Activated CD4-positive, alpha-beta memory T cell treated with anti-CD3 and anti-CD28 coated beads for 36 hours (primary cell): ENCODE measurements at regions of chr5 and their contacts with region 1.

Region 1: GRCh38 chr5:59799668-59800346 is 93.7 kb downstream of the PDE4D start:
- DNase-seq: no peak
- H3K4me3 Mint-ChIP-seq: no peak overlapping the region
- H3K27ac Mint-ChIP-seq: no peak overlapping the region
- H3K4me1 Mint-ChIP-seq: no peaks in the 10 kb centered on the region
- H3K27me3 Mint-ChIP-seq: peaks cover 7% of the 10 kb centered on the region

Region 2: DNA sequence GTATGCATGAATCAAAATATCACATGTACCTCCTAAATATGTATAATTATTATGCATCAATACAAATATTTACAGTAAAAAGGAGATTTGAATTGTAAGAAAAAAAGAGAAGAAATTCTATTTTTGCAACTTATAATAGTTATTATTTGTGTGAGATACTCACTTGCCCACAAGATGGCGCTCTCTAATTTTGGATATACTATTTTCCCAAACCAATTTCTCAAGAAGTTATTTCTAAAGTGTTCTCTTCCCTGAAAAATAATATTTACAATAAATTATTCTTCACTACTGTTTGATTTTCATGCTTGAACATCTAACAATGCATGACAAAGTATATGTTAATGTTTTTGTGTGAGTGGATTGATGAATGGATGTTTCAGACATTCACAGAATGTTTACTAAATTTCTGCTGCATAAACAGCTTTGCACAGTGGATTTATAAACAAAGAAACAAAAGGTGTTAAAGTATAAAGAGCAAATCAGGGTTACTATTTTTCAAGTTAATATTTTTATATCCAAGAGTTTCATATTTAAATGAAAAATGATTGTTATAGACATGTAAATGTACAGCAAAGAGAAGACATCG is 409.6 kb before region 1 on chr5:
- CTCF ChIA-PET with region 1: interaction called, 53 read pairs
- POLR2A ChIA-PET with region 1: no interaction called
- intact Hi-C with region 1: loop called (anchors 1 kb)
- DNase-seq: no peak
- H3K4me3 Mint-ChIP-seq: no peak overlapping the region
- H3K27ac Mint-ChIP-seq: no peak overlapping the region
- H3K4me1 Mint-ChIP-seq: no peaks in the 10 kb centered on the region
- H3K27me3 Mint-ChIP-seq: peaks cover 6% of the 10 kb centered on the region

Region 3: GRCh38 chr5:59506285-59506877 is 293.4 kb before region 1 on chr5:
- CTCF ChIA-PET with region 1: interaction called, 14 read pairs
- POLR2A ChIA-PET with region 1: no interaction called
- intact Hi-C with region 1: loop called (anchors 1 kb)
- DNase-seq: no peak
- H3K4me3 Mint-ChIP-seq: no peak overlapping the region
- H3K27ac Mint-ChIP-seq: no peak overlapping the region
- H3K4me1 Mint-ChIP-seq: no peaks in the 10 kb centered on the region
- H3K27me3 Mint-ChIP-seq: no peaks in the 10 kb centered on the region

Region 4: DNA sequence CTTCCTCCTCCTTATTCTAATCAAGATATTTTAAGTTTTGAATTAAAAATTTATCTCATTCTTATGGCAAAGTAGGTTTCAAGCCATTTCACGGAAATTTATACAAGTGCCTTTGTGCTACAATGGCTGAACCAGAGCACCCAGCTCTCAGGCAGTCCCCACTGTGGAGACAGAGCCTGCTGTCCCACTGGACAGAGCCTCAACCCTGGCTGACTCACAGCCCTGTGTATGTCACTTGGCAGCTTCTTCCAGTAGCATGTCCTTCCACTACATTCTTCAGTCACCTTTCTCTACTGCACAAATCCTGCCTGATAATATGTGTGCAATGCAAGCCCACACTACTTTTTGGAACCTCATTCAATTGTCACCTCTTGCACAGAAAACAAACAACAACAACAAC is 159.4 kb before region 1 on chr5:
- CTCF ChIA-PET with region 1: no interaction called
- POLR2A ChIA-PET with region 1: no interaction called
- intact Hi-C with region 1: no loop called
- DNase-seq: no peak
- H3K4me3 Mint-ChIP-seq: no peak overlapping the region
- H3K27ac Mint-ChIP-seq: no peak overlapping the region
- H3K4me1 Mint-ChIP-seq: peaks cover 3% of the 10 kb centered on the region
- H3K27me3 Mint-ChIP-seq: peaks cover 5% of the 10 kb centered on the region

Region 5: GRCh38 chr5:59724482-59725391 is 75.1 kb before region 1 on chr5:
- CTCF ChIA-PET with region 1: interaction called, 7 read pairs
- POLR2A ChIA-PET with region 1: no interaction called
- intact Hi-C with region 1: loop called (anchors 5 kb)
- DNase-seq: peak; percentile 30
- H3K4me3 Mint-ChIP-seq: no peak overlapping the region
- H3K27ac Mint-ChIP-seq: no peak overlapping the region
- H3K4me1 Mint-ChIP-seq: no peaks in the 10 kb centered on the region
- H3K27me3 Mint-ChIP-seq: peaks cover under 1% of the 10 kb centered on the region

Region 6: GRCh38 chr5:59756373-59757035 is 43.3 kb before region 1 on chr5:
- CTCF ChIA-PET with region 1: no interaction called
- POLR2A ChIA-PET with region 1: no interaction called
- intact Hi-C with region 1: no loop called
- DNase-seq: no peak
- H3K4me3 Mint-ChIP-seq: no peak overlapping the region
- H3K27ac Mint-ChIP-seq: no peak overlapping the region
- H3K4me1 Mint-ChIP-seq: no peaks in the 10 kb centered on the region
- H3K27me3 Mint-ChIP-seq: peaks cover 1% of the 10 kb centered on the region